ENCODE measurements at regions of chr10 and their contacts with region 1.

Region 1: DNA sequence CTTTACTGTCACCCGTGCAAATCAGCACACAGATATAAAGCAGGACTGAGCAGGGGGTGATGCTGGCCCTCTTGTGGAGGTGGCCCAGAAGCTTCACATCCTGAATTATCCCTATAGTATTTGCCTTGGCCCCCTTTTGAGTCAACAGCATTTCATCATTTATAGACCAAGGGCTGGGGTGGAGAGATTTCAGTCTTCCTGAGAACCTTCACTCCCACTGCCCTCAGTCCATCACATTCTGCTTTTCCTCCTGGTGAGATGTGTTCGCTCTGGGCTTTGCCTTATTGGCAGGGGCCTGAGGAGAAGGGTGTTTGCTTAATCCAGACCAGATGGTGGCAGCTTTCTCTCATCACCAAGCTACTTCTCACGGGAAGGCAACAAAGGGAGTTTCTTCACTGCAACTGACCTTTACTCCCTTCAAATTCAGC is 47.7 kb downstream of the NOC3L start:
- DNase-seq: no peak
- H3K4me3 ChIP-seq: no peak overlapping the region
- H3K27me3 ChIP-seq: no peaks in the 10 kb centered on the region; the same call in 1 of the 2 replicates
- CTCF ChIP-seq: no peak

Region 2: DNA sequence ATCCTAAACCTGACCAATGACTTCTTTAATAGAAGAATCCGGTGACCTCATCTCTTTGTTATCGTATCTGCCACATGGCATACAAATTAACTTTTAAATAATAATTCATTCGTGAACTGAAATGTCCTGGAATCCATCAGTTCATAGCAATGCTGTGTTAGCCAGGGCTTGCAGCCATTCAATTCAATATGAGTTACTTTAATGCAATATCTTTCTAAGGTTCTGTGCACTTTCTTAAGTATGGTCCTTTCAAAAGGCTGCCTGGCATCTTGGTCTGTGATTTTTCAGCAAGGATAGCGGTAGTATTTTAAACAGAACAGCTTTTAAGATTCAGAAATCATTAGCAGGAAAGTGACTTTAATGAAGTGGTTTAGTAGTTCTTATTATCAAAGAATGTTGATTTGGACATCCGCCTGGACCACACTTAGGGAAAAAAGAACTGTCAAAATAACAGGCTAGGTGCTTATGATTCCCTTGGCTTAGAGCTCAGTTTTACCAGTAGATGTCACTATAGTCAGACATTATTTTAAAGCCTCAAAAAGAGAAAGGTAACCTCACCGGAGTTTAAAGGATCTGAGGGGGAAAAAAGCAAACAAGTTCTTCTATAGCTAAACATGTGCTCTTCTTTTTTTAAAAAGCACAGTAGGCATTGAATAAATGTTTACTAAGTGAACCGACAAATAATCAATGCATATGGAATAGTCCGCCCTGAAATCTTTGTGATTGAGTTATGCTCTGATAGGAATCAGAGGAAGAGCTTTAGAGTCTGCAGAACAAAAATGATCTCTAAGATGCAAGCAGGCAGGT is 398.6 kb before region 1 on chr10:
- CTCF ChIA-PET with region 1: interaction called, 65 read pairs
- POLR2A ChIA-PET with region 1: no interaction called
- DNase-seq: no peak
- H3K4me3 ChIP-seq: no peak overlapping the region
- H3K27me3 ChIP-seq: no peaks in the 10 kb centered on the region
- CTCF ChIP-seq: peak; percentile 60

Region 3: GRCh38 chr10:94370501-94370900 is 55.5 kb after region 1 on chr10:
- CTCF ChIA-PET with region 1: no interaction called
- POLR2A ChIA-PET with region 1: no interaction called
- DNase-seq: no peak
- H3K4me3 ChIP-seq: no peak overlapping the region
- H3K27me3 ChIP-seq: peaks cover 4% of the 10 kb centered on the region
- CTCF ChIP-seq: no peak

Measured in BJ (cell line).